HepG2 (cell line): ENCODE measurements at regions of chr1 and their contacts with region 1.

Region 1: DNA sequence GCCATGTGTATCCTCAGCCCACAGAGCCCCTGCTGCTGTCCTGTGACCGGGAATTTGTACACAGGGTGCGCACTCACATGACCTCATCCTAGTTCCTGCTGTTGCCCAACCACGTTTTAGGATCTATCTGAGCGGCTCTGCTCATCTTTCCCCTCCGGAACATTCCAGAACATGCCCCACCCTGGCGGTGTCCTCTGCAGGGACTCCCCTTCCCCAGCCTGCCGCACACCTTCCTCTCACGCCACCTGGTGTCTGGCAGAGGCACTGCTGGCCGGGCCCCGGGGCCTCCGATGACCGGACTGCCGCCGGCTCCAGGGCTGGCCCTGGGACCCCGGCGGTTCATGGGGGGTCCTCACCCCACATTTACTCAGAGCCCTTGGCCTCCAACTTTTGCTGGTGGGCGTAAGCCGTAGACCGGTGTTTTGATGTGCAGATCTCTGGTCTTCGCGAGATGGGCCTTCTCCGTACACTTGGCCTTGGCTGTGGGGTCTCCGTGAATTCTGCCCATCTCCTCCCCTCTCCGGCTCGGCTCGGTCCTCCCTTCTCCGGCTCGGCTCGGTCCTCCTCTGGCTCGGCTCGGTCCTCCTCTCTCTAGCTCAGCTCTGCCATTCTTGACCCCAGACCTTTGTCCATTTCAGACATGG is 29.5 kb downstream of the ARHGEF16 start:
- DNase-seq: peak; percentile 36
- ATAC-seq: peak; percentile 54
- H3K4me3 ChIP-seq: no peak overlapping the region; a peak in 1 of 6 replicates
- H3K27ac ChIP-seq: no peak overlapping the region
- H3K4me1 ChIP-seq: peaks cover 40% of the 10 kb centered on the region
- H3K27me3 ChIP-seq: 0 out of 5 replicates have a peak, but pooled peaks cover under 1 to 1% of the 10 kb centered on the region in 2 experiments
- CTCF ChIP-seq: peak; percentile 94
- EP300 ChIP-seq: no peak
- POLR2A ChIP-seq: no peak; a peak in 1 of 4 replicates
- RAD21 ChIP-seq: peak; percentile 91

Region 2: DNA sequence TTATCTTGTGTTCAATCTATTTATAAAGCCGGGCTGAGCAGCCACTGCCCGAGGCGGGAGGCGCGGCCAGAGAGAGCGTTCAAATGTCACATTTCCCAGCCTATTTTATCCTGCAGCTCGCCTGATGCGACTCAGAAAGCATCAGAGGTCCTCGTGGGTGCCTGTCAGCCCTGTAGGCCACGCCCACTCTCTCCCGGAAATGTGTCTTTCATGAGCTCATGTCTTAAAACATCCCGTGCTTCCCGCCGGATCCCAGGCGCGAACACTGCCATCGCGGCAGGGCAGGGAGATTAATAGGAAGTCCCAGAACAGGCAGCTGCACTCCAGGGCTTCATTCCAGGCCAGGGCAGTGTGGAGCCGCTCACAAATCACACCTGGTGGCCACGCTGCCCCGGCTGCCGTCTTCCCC is 297.4 kb before region 1 on chr1:
- CTCF ChIA-PET with region 1: no interaction called
- POLR2A ChIA-PET with region 1: no interaction called
- in situ Hi-C with region 1: no loop called
- intact Hi-C with region 1: no loop called
- DNase-seq: no peak
- ATAC-seq: peak; percentile 28; the same call in 2 of the 3 replicates
- H3K4me3 ChIP-seq: no peak overlapping the region
- H3K27ac ChIP-seq: no peak overlapping the region
- H3K4me1 ChIP-seq: peaks cover 15% of the 10 kb centered on the region
- H3K27me3 ChIP-seq: peaks cover 0 to 6% of the 10 kb centered on the region in 2 experiments; a peak in 3 of 5 replicates
- CTCF ChIP-seq: no peak
- EP300 ChIP-seq: no peak
- POLR2A ChIP-seq: no peak
- RAD21 ChIP-seq: no peak

Region 3: GRCh38 chr1:3441410-3441847 is 42.5 kb before region 1 on chr1:
- CTCF ChIA-PET with region 1: no interaction called
- POLR2A ChIA-PET with region 1: no interaction called
- in situ Hi-C with region 1: loop called (anchors 5 kb)
- intact Hi-C with region 1: no loop called
- DNase-seq: peak; percentile 62
- ATAC-seq: peak; percentile 41
- H3K4me3 ChIP-seq: no peak overlapping the region
- H3K27ac ChIP-seq: peak overlapping the region; percentile 6
- H3K4me1 ChIP-seq: peaks cover 65% of the 10 kb centered on the region
- H3K27me3 ChIP-seq: peaks cover 3 to 13% of the 10 kb centered on the region in 2 experiments; a peak in 2 of 5 replicates
- CTCF ChIP-seq: no peak
- EP300 ChIP-seq: no peak
- POLR2A ChIP-seq: no peak
- RAD21 ChIP-seq: no peak

Region 4: GRCh38 chr1:3453203-3453761 is 30.6 kb before region 1 on chr1:
- CTCF ChIA-PET with region 1: interaction called, 70 read pairs
- POLR2A ChIA-PET with region 1: interaction called, 19 read pairs
- in situ Hi-C with region 1: no loop called
- intact Hi-C with region 1: loop called (anchors 1 kb)
- DNase-seq: peak; percentile 69
- ATAC-seq: peak; percentile 22
- H3K4me3 ChIP-seq: peak overlapping the region in 1 of 3 experiments; percentile 79; a peak in 1 of 6 replicates
- H3K27ac ChIP-seq: peak overlapping the region; percentile 98
- H3K4me1 ChIP-seq: peaks cover 74% of the 10 kb centered on the region
- H3K27me3 ChIP-seq: no peaks in the 10 kb centered on the region
- CTCF ChIP-seq: peak; percentile 98
- EP300 ChIP-seq: no peak
- POLR2A ChIP-seq: no peak
- RAD21 ChIP-seq: peak; percentile 99

Region 5: GRCh38 chr1:3471302-3472087 is 12.4 kb before region 1 on chr1:
- CTCF ChIA-PET with region 1: no interaction called
- POLR2A ChIA-PET with region 1: interaction called, 20 read pairs
- in situ Hi-C with region 1: no loop called
- intact Hi-C with region 1: no loop called
- DNase-seq: peak; percentile 89
- ATAC-seq: peak; percentile 80
- H3K4me3 ChIP-seq: peak overlapping the region in 2 of 3 experiments; percentile 9 to 62; a peak in 4 of 6 replicates
- H3K27ac ChIP-seq: peak overlapping the region; percentile 96
- H3K4me1 ChIP-seq: peaks cover 26% of the 10 kb centered on the region
- H3K27me3 ChIP-seq: no peaks in the 10 kb centered on the region
- CTCF ChIP-seq: peak; percentile 96
- EP300 ChIP-seq: peak in 1 of 2 experiments; percentile 80; a peak in 2 of 4 replicates
- POLR2A ChIP-seq: peak in 1 of 2 experiments; percentile 56; a peak in 2 of 4 replicates
- RAD21 ChIP-seq: peak; percentile 94

Region 6: DNA sequence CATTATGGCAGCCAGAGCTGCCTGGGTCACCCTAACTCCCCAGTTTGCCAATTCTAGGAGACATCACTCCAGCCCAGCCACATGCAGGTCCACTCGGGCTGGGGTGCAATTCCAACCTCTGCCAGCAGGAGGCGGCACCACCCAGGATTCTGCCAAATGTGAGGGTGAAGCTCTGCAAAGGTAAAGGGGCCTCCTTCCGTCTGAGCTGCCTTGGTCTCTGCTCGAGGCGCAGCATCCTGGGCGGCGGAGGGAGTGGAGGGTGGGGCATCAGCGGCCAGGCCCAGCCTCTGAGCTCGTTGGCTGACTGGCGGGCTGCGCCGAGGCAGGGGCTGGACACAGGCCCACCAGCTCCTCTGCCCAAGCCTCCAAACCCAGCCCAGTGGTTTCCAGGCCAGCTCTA is 34.3 kb after region 1 on chr1:
- CTCF ChIA-PET with region 1: no interaction called
- POLR2A ChIA-PET with region 1: no interaction called
- in situ Hi-C with region 1: no loop called
- intact Hi-C with region 1: no loop called
- DNase-seq: no peak
- ATAC-seq: no peak
- H3K4me3 ChIP-seq: no peak overlapping the region
- H3K27ac ChIP-seq: no peak overlapping the region
- H3K4me1 ChIP-seq: no peaks in the 10 kb centered on the region
- H3K27me3 ChIP-seq: peaks cover 8 to 19% of the 10 kb centered on the region in 2 experiments; a peak in 4 of 5 replicates
- CTCF ChIP-seq: peak; percentile 60
- EP300 ChIP-seq: no peak
- POLR2A ChIP-seq: no peak
- RAD21 ChIP-seq: no peak

Region 7: GRCh38 chr1:3564921-3565827 is 81.3 kb after region 1 on chr1:
- CTCF ChIA-PET with region 1: no interaction called
- POLR2A ChIA-PET with region 1: no interaction called
- in situ Hi-C with region 1: no loop called
- intact Hi-C with region 1: no loop called
- DNase-seq: no peak
- ATAC-seq: peak; percentile 41
- H3K4me3 ChIP-seq: no peak overlapping the region
- H3K27ac ChIP-seq: no peak overlapping the region
- H3K4me1 ChIP-seq: peaks cover 12% of the 10 kb centered on the region; the same call in 1 of the 2 replicates
- H3K27me3 ChIP-seq: peaks cover 2 to 34% of the 10 kb centered on the region in 2 experiments; a peak in 3 of 5 replicates
- CTCF ChIP-seq: peak; percentile 95
- EP300 ChIP-seq: no peak
- POLR2A ChIP-seq: no peak
- RAD21 ChIP-seq: peak; percentile 90